ENCODE measurements at regions of chr22 and their contacts with region 1.

Region 1: GRCh38 chr22:37199103-37199759 is 11.2 kb upstream of the C1QTNF6 start:
- H3K4me3 Mint-ChIP-seq: peak overlapping the region; percentile 87
- H3K27ac Mint-ChIP-seq: peak overlapping the region; percentile 88
- H3K4me1 Mint-ChIP-seq: peaks cover 31% of the 10 kb centered on the region
- H3K27me3 Mint-ChIP-seq: peaks cover 8% of the 10 kb centered on the region

Region 2: GRCh38 chr22:37077884-37078485 is 121.2 kb before region 1 on chr22:
- intact Hi-C with region 1: loop called (anchors 2 kb)
- H3K4me3 Mint-ChIP-seq: no peak overlapping the region
- H3K27ac Mint-ChIP-seq: no peak overlapping the region
- H3K4me1 Mint-ChIP-seq: peaks cover 29% of the 10 kb centered on the region
- H3K27me3 Mint-ChIP-seq: peaks cover 23% of the 10 kb centered on the region

Region 3: DNA sequence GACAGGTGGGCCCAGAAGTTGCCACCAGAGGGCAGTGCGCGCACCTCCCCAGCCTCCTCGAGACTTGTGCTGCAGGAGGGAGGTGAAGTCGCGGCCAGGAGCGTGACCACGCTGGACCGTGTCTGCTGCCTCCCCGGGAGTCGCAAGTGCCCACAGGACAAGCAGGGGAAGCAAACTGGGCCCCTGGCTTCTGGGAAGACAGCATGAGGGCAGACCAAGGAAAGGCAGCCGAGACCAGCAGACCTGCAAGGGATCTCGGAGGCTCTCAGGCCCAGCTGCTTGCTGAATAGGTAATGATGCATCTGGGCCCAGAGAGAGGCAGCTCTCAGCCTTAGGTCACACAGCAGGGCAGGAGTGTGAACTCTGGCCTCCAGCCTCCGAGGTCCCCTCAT is 32.6 kb before region 1 on chr22:
- intact Hi-C with region 1: loop called (anchors 1 kb)
- H3K4me3 Mint-ChIP-seq: no peak overlapping the region
- H3K27ac Mint-ChIP-seq: no peak overlapping the region
- H3K4me1 Mint-ChIP-seq: peaks cover 6% of the 10 kb centered on the region
- H3K27me3 Mint-ChIP-seq: peaks cover 37% of the 10 kb centered on the region

Region 4: GRCh38 chr22:37229805-37230672 is 30.8 kb after region 1 on chr22:
- intact Hi-C with region 1: no loop called
- H3K4me3 Mint-ChIP-seq: peak overlapping the region; percentile 51
- H3K27ac Mint-ChIP-seq: peak overlapping the region; percentile 94
- H3K4me1 Mint-ChIP-seq: peaks cover 91% of the 10 kb centered on the region
- H3K27me3 Mint-ChIP-seq: no peaks in the 10 kb centered on the region

Region 5: DNA sequence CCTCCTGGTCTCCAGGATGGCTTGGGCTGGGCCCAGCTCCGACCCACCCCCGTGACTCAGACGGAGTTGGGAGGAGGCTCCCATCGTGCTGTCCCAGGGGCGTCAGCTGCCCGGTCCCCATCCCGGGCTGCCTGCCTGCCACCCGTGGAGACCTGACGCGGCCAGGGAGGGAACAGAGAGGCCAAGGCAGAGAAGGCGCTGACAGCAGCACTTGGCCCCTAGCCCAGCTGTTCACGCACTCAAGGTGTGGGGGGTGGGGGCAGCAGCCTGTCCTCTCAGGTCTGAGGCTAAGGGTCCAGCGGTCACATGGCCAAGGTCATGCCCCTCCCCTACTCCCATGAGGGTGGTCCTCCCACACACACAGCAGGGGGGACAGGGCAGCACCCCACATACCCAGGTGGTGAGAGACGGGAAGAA is 179.4 kb after region 1 on chr22:
- intact Hi-C with region 1: no loop called
- H3K4me3 Mint-ChIP-seq: no peak overlapping the region
- H3K27ac Mint-ChIP-seq: no peak overlapping the region
- H3K4me1 Mint-ChIP-seq: peaks cover 4% of the 10 kb centered on the region
- H3K27me3 Mint-ChIP-seq: peaks cover 87% of the 10 kb centered on the region